GM12878 (cell line): ENCODE measurements at regions of chr13 and their contacts with region 1.

Region 1: DNA sequence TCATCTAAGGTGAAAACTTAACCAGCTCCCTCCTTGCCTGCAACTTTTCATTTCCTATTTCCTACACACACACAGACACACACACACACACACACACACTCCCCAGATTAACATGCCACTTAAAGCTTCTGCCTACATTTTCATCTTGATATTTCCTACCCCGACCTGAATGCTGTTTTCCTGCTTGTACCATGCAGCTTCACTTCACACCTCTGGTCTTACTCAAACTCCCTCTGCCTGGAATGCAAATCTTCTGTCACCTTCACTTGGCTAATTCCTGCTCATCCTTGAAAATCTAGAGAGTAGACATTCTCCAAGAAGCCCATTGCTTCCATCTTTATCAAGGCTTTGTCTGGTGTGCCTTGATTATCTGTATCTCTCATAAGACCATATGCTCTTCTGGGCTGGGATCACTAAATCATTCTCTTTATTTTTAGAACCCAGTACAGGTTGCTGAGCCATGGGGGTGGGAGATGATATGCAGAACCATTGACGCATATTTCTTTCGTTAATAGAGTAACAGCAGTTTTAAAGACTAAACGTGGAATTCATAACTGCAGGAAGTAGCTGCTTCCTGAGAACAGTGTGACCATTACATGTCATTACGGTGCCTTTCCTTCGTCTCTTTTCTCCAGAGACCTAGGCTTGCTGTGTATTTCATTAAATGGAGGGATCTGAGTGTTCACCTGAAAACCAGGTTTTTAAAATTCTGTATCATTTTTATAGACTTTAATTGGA is 37.7 kb downstream of the CNMD start:
- DNase-seq: no peak
- ATAC-seq: no peak
- H3K4me3 ChIP-seq: no peak overlapping the region
- H3K27ac ChIP-seq: no peak overlapping the region
- H3K4me1 ChIP-seq: no peaks in the 10 kb centered on the region
- H3K27me3 ChIP-seq: no peaks in the 10 kb centered on the region
- CTCF ChIP-seq: no peak
- EP300 ChIP-seq: no peak
- POLR2A ChIP-seq: no peak
- RAD21 ChIP-seq: no peak

Region 2: DNA sequence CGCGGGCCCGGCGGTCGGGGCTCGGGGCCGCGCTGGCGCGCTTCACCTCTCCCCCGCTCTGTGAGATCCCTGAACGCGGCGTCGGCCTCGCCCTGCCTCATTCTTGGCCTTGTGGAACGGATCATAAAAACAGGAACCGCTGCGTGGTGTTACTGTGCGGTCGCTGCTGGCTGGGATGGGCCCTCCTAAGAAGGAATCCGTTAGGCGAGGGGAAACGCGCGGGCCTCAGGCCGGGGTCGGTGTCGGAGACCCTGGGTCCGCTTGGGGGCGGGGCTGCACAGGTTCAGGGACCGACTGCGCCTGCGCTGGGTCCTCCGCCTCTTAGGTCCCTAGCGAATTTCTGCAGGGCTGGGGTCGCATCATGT is 246.2 kb before region 1 on chr13:
- CTCF ChIA-PET with region 1: no interaction called
- POLR2A ChIA-PET with region 1: no interaction called
- RAD21 ChIA-PET with region 1: no interaction called
- SMC1A ChIA-PET with region 1: no interaction called
- in situ Hi-C with region 1: no loop called
- intact Hi-C with region 1: no loop called
- DNase-seq: no peak
- ATAC-seq: peak; percentile 64
- H3K4me3 ChIP-seq: peak overlapping the region; percentile 86
- H3K27ac ChIP-seq: peak overlapping the region; percentile 91
- H3K4me1 ChIP-seq: peaks cover 4% of the 10 kb centered on the region; the same call in 1 of the 2 replicates
- H3K27me3 ChIP-seq: no peaks in the 10 kb centered on the region
- CTCF ChIP-seq: no peak
- EP300 ChIP-seq: no peak; a peak in 1 of 4 replicates
- POLR2A ChIP-seq: no peak
- RAD21 ChIP-seq: no peak

Region 3: GRCh38 chr13:52713894-52714293 is 12.0 kb after region 1 on chr13:
- CTCF ChIA-PET with region 1: interaction called, 3 read pairs
- POLR2A ChIA-PET with region 1: interaction called, 4 read pairs
- RAD21 ChIA-PET with region 1: interaction called, 8 read pairs
- SMC1A ChIA-PET with region 1: interaction called, 29 read pairs
- in situ Hi-C with region 1: no loop called
- intact Hi-C with region 1: no loop called
- DNase-seq: no peak
- ATAC-seq: no peak
- H3K4me3 ChIP-seq: no peak overlapping the region
- H3K27ac ChIP-seq: no peak overlapping the region
- H3K4me1 ChIP-seq: no peaks in the 10 kb centered on the region
- H3K27me3 ChIP-seq: no peaks in the 10 kb centered on the region
- CTCF ChIP-seq: no peak
- EP300 ChIP-seq: no peak
- POLR2A ChIP-seq: no peak
- RAD21 ChIP-seq: no peak